Activated CD4-positive, alpha-beta memory T cell treated with anti-CD3 and anti-CD28 coated beads for 36 hours (primary cell): ENCODE measurements at regions of chr2 and their contacts with region 1.

Region 1: GRCh38 chr2:25606892-25607291 is 66.5 kb downstream of the DTNB start:
- DNase-seq: no peak
- H3K4me3 Mint-ChIP-seq: no peak overlapping the region
- H3K27ac Mint-ChIP-seq: no peak overlapping the region
- H3K4me1 Mint-ChIP-seq: peaks cover 6% of the 10 kb centered on the region
- H3K27me3 Mint-ChIP-seq: no peaks in the 10 kb centered on the region

Region 2: DNA sequence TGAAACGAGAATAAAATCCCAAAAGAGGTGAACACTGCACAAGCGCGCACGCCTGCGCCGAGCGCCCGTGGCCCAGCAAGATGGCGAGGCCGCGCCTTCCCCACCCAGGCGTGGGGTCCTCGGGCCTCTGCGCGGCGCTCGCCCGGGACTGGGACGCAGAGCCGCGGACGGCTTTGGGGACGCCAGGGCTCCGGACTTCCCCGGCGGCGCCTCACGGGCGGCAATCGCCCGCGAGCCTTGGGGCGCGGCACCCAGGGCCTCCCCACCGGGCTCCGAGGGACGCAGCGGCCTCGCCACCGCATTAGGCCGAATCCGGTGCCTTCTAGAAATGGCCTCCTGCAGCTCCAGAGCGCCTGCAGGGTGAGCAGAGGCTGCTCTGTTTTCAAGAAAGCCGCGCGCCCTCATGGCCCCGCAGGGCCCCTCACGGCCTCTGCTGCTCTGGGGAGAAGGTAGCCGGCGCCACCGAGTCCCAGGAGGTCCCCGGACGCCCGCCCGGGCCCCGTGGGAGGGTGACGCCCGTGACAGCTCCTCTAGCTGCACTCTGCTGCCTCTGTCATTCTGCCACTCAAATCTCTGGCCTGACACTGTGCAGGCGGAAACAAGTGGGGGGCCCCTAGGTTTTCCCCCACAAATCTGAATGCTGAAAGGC is 402.6 kb before region 1 on chr2:
- CTCF ChIA-PET with region 1: no interaction called
- POLR2A ChIA-PET with region 1: no interaction called
- intact Hi-C with region 1: no loop called
- DNase-seq: no peak
- H3K4me3 Mint-ChIP-seq: no peak overlapping the region
- H3K27ac Mint-ChIP-seq: no peak overlapping the region
- H3K4me1 Mint-ChIP-seq: peaks cover 6% of the 10 kb centered on the region
- H3K27me3 Mint-ChIP-seq: no peaks in the 10 kb centered on the region

Region 3: DNA sequence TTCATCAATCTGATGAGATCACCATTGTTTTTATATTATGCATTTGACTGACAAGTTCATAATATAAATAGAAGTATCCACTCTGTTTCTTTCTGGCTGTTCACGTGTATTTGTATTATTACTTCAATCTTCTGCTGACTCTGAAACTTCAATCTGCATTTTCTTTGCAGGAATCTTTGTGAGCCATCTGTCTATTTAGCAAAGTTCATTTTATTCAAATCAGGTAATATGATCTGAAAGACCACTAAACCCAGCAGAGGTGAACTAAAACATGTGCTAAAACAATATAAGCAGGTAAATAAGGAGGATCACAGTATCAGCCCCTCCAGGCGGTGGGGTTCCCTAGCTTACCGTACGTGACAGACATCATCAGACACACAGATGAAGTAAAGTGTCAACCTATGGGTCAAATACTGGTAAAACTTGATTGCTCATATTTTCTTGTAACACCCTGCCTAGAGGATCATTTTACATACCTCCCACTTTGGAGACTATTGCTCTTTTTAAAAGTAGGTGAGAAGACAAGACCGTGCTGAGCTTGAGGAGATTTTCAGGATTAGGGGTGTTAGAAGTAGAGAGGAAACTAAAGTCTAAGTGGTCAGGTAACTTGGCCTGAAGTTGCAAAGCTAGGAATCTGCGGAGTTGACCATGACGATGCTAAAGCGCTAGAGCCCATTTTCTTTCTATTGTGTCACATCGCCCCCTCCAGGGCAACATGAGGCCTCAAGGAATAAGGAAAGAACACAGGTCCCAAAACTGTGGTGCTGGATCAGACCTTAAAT is 57.5 kb after region 1 on chr2:
- CTCF ChIA-PET with region 1: interaction called, 33 read pairs
- POLR2A ChIA-PET with region 1: no interaction called
- intact Hi-C with region 1: loop called (anchors 2 kb)
- DNase-seq: peak; percentile 39
- H3K4me3 Mint-ChIP-seq: no peak overlapping the region
- H3K27ac Mint-ChIP-seq: no peak overlapping the region
- H3K4me1 Mint-ChIP-seq: peaks cover 21% of the 10 kb centered on the region
- H3K27me3 Mint-ChIP-seq: no peaks in the 10 kb centered on the region

Region 4: DNA sequence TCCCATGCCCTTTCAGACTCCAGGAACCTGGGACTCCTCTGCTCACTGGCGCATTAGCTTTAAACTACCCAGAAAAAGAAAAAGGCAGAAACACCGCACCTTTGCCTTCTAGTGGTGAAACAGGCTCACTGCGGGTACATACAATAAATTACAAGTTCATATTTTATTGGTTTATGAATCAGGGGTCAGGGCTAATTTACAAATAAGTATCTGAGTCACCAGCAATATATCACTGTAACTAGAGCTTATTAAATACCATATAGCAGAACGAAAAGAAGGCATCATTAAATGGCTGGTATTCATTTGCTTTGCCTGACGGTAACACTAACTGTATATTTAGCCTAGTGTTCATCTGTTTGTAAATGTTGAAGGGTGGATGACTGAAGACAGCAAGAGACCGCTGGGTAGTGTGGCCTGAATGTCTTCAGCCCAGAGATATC is 93.3 kb after region 1 on chr2:
- CTCF ChIA-PET with region 1: interaction called, 132 read pairs
- POLR2A ChIA-PET with region 1: no interaction called
- intact Hi-C with region 1: loop called (anchors 1 kb)
- DNase-seq: peak; percentile 39
- H3K4me3 Mint-ChIP-seq: no peak overlapping the region
- H3K27ac Mint-ChIP-seq: no peak overlapping the region
- H3K4me1 Mint-ChIP-seq: peaks cover 4% of the 10 kb centered on the region
- H3K27me3 Mint-ChIP-seq: no peaks in the 10 kb centered on the region

Region 5: GRCh38 chr2:25951071-25951547 is 344.2 kb after region 1 on chr2:
- CTCF ChIA-PET with region 1: interaction called, 18 read pairs
- POLR2A ChIA-PET with region 1: no interaction called
- intact Hi-C with region 1: loop called (anchors 2 kb)
- DNase-seq: peak; percentile 81
- H3K4me3 Mint-ChIP-seq: no peak overlapping the region
- H3K27ac Mint-ChIP-seq: no peak overlapping the region
- H3K4me1 Mint-ChIP-seq: no peaks in the 10 kb centered on the region
- H3K27me3 Mint-ChIP-seq: no peaks in the 10 kb centered on the region